Naive thymus-derived CD4-positive, alpha-beta T cell (primary cell): ENCODE measurements at regions of chr11 and their contacts with region 1.

Region 1: GRCh38 chr11:6667733-6668374 is 12.2 kb upstream of the DCHS1 start:
- DNase-seq: peak in 8 of 9 donors; percentile 23 to 53 (median 46)
- ATAC-seq: peak; percentile 87
- H3K4me3 ChIP-seq: no peak overlapping the region
- H3K4me3 Mint-ChIP-seq: peak overlapping the region in 3 of 10 donors; percentile 18 to 65 (median 39)
- H3K27ac ChIP-seq: peak overlapping the region; percentile 29
- H3K27ac Mint-ChIP-seq: peak overlapping the region; percentile 38 to 91 (median 64)
- H3K4me1 ChIP-seq: peaks cover 10 to 43% of the 10 kb centered on the region in 2 donors
- H3K4me1 Mint-ChIP-seq: peaks cover 35 to 85% (median 70%) of the 10 kb centered on the region in 7 donors
- H3K27me3 ChIP-seq: no peaks in the 10 kb centered on the region
- H3K27me3 Mint-ChIP-seq: peaks cover 0 to 13% (median 0%) of the 10 kb centered on the region in 5 donors

Region 2: DNA sequence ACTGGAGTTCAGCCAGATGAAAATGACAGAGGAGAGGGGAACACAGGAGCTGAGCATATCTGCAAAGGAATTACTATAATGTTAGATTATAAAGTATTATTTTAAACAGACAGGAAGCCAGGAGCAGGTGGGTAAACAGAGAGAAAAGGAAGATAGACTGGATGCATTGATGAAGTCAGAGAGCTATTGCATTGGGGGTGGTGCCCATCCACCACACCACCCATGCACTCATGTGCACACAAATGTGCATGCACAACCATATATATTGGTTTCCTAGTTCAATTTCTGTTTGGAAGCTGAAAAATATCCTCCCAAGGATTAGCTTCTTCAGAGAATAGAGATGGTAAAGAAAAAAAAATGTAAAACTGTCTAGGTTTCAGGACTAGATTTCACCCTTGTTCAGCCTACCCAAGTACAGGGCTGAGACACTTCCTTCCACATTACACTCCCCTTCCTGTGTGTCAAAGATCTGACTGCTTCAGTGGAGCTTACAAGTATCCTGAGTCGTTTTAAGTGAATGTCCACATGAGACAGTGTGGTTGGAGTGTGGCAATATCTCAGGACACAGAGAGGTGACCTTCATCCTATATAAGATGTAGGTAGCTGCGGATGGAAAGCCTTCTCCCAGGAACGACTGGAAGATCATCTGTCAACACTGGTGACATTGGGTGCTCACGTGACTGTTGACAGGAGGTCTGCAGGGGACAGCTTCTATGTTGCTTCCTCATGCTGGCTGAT is 289.8 kb before region 1 on chr11:
- CTCF ChIA-PET with region 1: no interaction called
- POLR2A ChIA-PET with region 1: no interaction called
- intact Hi-C with region 1: no loop called
- DNase-seq: peak in 5 of 9 donors; percentile 20 to 52 (median 45)
- ATAC-seq: peak; percentile 79
- H3K4me3 ChIP-seq: peak overlapping the region; percentile 17
- H3K4me3 Mint-ChIP-seq: peak overlapping the region; percentile 48 to 85 (median 72)
- H3K27ac ChIP-seq: peak overlapping the region; percentile 44
- H3K27ac Mint-ChIP-seq: peak overlapping the region; percentile 69 to 93 (median 85)
- H3K4me1 ChIP-seq: peaks cover 0 to 23% of the 10 kb centered on the region in 2 donors
- H3K4me1 Mint-ChIP-seq: peaks cover 14 to 44% (median 37%) of the 10 kb centered on the region in 7 donors
- H3K27me3 ChIP-seq: no peaks in the 10 kb centered on the region
- H3K27me3 Mint-ChIP-seq: no peaks in the 10 kb centered on the region

Region 3: DNA sequence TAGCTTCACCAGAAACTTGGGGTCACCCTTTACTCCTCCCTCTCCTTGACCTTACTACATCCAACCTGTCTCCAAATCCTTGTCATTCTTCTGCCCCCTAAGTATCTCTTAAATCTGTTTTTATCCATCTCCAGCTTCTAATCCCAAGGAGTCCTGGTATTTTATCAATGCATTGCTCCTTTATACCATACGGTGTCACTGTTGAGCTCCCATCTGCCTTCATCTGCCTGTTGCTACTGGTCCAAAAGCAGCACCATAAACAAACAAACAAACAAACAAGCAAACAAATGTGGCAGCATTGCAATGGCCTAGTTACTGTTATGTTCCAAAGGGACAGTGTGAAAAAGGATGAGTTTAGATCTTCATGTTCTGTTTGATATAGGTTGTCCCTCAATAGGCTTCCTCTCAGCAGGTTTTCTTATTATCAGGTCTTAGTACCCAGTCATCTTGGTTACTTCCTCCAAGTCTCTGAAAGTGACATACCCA is 136.5 kb before region 1 on chr11:
- CTCF ChIA-PET with region 1: interaction called, 5 read pairs
- POLR2A ChIA-PET with region 1: no interaction called
- intact Hi-C with region 1: loop called in 1 of 2 experiments (anchors 1 kb)
- DNase-seq: peak in 7 of 9 donors; percentile 7 to 51 (median 39)
- ATAC-seq: peak; percentile 83
- H3K4me3 ChIP-seq: no peak overlapping the region
- H3K4me3 Mint-ChIP-seq: no peak overlapping the region
- H3K27ac ChIP-seq: no peak overlapping the region
- H3K27ac Mint-ChIP-seq: no peak overlapping the region
- H3K4me1 ChIP-seq: peaks cover 4 to 5% of the 10 kb centered on the region in 2 donors
- H3K4me1 Mint-ChIP-seq: peaks cover 5 to 14% (median 11%) of the 10 kb centered on the region in 7 donors
- H3K27me3 ChIP-seq: no peaks in the 10 kb centered on the region
- H3K27me3 Mint-ChIP-seq: no peaks in the 10 kb centered on the region

Region 4: DNA sequence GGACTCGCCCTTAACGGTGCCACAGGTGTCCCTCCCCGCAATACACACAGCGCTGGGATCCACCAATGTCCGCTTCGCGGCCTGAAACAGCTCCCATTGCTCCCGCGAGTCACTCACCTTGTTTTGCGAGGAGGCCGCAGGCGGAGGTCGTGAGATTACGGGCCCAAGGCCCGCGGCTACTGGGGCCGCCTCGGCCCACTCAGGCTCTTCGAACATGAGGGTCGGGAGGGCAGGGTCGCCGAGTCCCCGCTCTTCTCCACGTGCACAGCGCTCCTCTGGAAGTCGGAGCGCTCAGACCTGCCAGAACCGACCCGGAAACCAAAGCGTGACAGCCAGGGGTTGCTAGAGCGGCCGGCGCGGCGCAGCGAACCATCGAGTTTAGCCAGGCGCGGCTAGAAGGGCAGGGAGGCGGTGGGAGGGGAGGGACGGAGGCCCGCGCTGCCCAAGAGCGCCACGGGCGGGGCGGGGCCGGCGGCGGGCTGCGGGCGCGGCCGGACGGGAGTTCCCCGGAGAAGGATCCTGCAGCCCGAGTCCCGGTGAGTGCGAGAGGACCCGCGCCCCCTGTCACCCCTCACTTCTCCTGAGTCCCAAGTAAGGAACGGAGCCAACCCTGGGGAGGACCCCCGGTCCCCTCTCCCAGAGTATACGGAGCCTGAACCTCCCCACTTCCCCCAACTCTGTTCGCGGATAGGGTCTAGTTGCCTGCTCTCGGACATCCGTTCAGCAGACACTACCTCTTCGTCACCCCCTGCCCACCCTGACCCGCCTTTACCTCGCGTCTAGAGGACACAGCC is 64.4 kb before region 1 on chr11 and contains the starts of genes ILK and RRP8:
- CTCF ChIA-PET with region 1: interaction called, 28 read pairs
- POLR2A ChIA-PET with region 1: interaction called, 8 read pairs
- intact Hi-C with region 1: loop called in 1 of 2 experiments (anchors 1 kb)
- DNase-seq: peak; percentile 69 to 86 (median 78)
- ATAC-seq: peak; percentile 92
- H3K4me3 ChIP-seq: peak within 1 kb of the TSS; percentile 85
- H3K4me3 Mint-ChIP-seq: no peak within 1 kb of the TSS
- H3K27ac ChIP-seq: peak within 1 kb of the TSS; percentile 86
- H3K27ac Mint-ChIP-seq: no peak within 1 kb of the TSS
- H3K4me1 ChIP-seq: peaks cover 51% of the 10 kb centered on the region in 2 donors
- H3K4me1 Mint-ChIP-seq: peaks cover 9 to 33% (median 21%) of the 10 kb centered on the region in 7 donors
- H3K27me3 ChIP-seq: no peaks in the 10 kb centered on the region
- H3K27me3 Mint-ChIP-seq: no peaks in the 10 kb centered on the region
- total RNA-seq, gene ILK: 34.4 to 165 (median 89.6) TPM
- total RNA-seq, gene RRP8: 21.4 to 37.9 (median 27.9) TPM

Region 5: DNA sequence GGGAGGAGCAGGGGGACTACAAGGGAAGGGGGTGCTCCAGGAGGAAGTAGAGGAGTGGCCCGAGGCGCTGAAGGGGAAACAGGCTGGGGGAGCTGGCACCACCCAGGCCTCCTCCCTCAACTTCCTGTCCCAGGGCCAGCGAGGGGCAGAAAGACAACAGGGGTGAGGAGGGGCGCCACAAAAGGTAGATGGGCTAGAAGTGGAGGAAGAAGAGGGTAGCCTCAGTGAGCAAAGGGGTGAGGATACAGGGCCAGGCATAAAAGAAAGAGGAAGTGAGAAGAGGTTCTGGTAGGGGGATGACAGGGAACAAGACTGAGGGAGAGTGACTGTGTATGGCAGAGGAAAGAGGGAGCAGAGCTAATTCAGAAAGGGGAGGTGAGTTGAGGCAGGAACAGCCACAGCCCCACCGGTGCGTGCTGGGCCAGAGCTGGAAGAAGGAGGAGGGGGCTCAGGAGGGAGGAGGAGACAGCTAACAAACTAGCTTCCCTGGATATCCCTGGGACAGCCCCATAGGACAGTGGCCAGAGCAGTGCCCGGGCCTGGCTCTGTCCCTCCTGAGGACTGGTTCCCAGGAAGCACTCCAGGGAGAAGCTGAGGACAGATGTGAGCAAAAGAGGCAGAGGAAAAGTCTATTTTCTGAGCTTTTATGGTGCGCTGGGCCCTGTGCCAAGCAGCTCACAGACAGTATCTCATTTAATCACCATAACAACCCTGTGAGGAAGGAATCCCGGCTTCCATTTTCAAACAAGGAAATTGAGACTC is 20.8 kb before region 1 on chr11:
- CTCF ChIA-PET with region 1: interaction called, 16 read pairs
- POLR2A ChIA-PET with region 1: interaction called, 14 read pairs
- intact Hi-C with region 1: loop called (anchors 1 to 2 kb)
- DNase-seq: peak in 6 of 9 donors; percentile 32 to 39 (median 35)
- ATAC-seq: peak; percentile 73
- H3K4me3 ChIP-seq: peak overlapping the region; percentile 35
- H3K4me3 Mint-ChIP-seq: no peak overlapping the region
- H3K27ac ChIP-seq: peak overlapping the region; percentile 72
- H3K27ac Mint-ChIP-seq: no peak overlapping the region
- H3K4me1 ChIP-seq: peaks cover 21 to 49% of the 10 kb centered on the region in 2 donors
- H3K4me1 Mint-ChIP-seq: no peaks in the 10 kb centered on the region
- H3K27me3 ChIP-seq: no peaks in the 10 kb centered on the region
- H3K27me3 Mint-ChIP-seq: no peaks in the 10 kb centered on the region

Region 6: GRCh38 chr11:6655020-6655789 is 12.6 kb before region 1 on chr11:
- CTCF ChIA-PET with region 1: interaction called, 4 read pairs
- POLR2A ChIA-PET with region 1: interaction called, 14 read pairs
- intact Hi-C with region 1: loop called (anchors 1 to 2 kb)
- DNase-seq: peak in 7 of 9 donors; percentile 15 to 50 (median 34)
- ATAC-seq: peak; percentile 60
- H3K4me3 ChIP-seq: peak overlapping the region; percentile 52
- H3K4me3 Mint-ChIP-seq: no peak overlapping the region
- H3K27ac ChIP-seq: peak overlapping the region; percentile 66
- H3K27ac Mint-ChIP-seq: no peak overlapping the region
- H3K4me1 ChIP-seq: peaks cover 0 to 26% of the 10 kb centered on the region in 2 donors
- H3K4me1 Mint-ChIP-seq: peaks cover 5 to 11% (median 7%) of the 10 kb centered on the region in 7 donors
- H3K27me3 ChIP-seq: no peaks in the 10 kb centered on the region
- H3K27me3 Mint-ChIP-seq: peaks cover 0 to 16% (median 0%) of the 10 kb centered on the region in 5 donors

Region 7: DNA sequence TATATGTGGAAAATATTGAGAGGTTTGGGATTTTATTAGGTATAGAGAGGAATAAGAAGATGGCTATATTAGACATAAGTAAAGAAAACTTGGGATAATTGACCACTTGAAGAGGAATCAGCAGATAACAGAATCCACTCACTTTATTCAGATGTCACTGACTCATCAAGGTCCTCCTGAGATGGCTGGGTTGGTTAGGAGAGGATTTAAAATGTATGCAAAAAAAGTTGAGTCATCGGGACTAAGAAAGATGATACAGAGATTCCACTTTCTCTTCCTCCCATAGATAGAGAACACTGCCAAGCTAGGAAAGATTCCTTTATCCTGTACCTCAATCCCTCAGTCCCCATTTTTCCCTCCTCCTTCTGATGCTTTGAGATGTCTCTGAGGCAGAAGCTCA is 131.5 kb after region 1 on chr11 and contains the start of gene OR6A2:
- CTCF ChIA-PET with region 1: no interaction called
- POLR2A ChIA-PET with region 1: no interaction called
- intact Hi-C with region 1: no loop called
- DNase-seq: no peak
- ATAC-seq: no peak
- H3K4me3 ChIP-seq: no peak within 1 kb of the TSS
- H3K4me3 Mint-ChIP-seq: no peak within 1 kb of the TSS
- H3K27ac ChIP-seq: no peak within 1 kb of the TSS
- H3K27ac Mint-ChIP-seq: no peak within 1 kb of the TSS
- H3K4me1 ChIP-seq: no peaks in the 10 kb centered on the region
- H3K4me1 Mint-ChIP-seq: no peaks in the 10 kb centered on the region
- H3K27me3 ChIP-seq: no peaks in the 10 kb centered on the region
- H3K27me3 Mint-ChIP-seq: peaks cover 0 to 12% (median 7%) of the 10 kb centered on the region in 5 donors
- total RNA-seq, gene OR6A2: 0.34 TPM in 1 of 5 experiments, not detected in the others